AG04449 (cell line): ENCODE measurements at regions of chr12 and their contacts with region 1.

Region 1: DNA sequence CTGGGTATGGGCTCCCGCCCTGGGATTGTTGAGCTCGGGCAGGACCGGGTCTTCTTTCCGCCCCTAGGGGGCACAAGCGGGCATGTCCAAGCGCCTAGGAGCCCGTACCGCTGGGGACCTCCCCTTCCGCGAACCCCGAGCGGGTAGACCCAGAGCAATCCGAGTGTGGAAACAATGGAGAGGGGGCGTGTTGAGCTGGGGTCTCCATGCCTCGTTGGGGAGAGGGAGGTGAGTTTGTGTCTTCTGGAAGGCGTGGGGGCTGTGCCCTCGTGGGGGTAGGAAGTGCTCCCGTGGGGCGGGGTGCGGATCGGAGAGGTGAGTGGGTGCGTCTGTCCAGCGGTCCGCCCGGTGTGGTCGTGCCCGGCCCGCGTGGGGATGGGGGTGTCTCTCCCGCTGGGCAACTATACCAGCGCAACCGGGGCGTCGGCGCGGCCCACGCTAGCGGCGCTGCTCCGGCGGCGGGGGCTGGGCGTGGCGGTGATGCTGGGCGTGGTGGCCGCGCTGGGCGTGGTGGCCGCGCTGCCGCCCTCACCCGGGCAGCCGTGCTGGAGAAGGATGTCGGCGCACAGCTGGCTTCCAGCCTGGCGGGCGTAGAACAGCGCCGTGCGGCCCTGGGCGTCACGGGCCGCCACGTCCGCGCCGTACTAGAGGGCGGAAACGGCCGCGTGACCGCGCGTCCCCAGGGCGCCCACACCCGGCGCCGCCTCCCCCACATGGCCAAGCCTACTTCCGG is 12.2 kb downstream of the AGAP2 start:
- DNase-seq: peak; percentile 29
- H3K4me3 ChIP-seq: peak overlapping the region; percentile 91
- CTCF ChIP-seq: peak; percentile 94

Region 2: DNA sequence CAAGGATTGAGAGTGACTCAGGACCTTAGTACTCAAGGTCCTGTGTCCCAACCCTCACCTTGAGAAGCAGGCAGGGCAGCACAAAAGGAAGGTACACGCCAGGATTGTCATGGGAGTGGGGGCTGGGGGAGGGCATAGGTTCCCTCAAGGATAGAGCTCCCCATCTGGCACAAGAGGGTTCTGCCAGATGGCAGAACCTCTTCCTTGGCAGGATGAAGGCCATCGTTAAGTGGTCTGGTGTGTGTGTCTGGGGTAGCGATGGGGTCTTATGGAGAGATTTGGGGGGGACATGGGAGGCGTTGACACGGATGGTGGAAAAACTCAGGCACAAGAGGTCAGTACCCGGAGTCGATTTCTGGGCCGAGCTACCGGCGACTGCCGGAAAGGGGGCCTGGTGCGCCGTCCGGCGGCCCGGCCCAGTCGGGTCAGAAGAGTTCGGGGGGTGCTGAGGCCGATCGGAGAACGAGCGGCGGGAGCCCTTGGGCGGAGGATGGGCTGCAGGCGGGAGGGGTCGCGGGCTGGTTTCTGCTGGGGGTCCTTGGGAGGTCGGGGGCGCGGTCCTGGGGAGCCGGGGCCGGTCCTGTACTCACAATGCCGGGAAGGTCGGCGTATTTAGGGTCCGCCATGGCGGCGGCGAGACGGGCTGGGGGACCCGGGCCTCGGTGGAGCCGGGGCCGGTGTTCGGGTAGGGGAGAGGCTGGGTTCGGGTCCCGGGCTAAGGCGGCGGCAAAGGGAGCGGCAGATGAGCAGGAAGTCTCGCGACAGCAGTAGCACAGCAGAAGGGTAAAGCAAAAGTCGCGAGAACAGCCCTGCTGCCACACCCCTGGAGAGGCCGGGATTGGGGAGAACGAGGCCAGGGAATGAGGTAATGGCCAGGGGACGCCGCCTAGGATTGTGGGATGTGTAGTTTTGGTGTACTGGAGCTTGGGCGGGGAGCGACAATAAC is 179.6 kb before region 1 on chr12 and contains the start of gene DCTN2:
- CTCF ChIA-PET with region 1: no interaction called
- POLR2A ChIA-PET with region 1: no interaction called
- DNase-seq: peak; percentile 80
- H3K4me3 ChIP-seq: peak within 1 kb of the TSS; percentile 89
- CTCF ChIP-seq: no peak

Region 3: DNA sequence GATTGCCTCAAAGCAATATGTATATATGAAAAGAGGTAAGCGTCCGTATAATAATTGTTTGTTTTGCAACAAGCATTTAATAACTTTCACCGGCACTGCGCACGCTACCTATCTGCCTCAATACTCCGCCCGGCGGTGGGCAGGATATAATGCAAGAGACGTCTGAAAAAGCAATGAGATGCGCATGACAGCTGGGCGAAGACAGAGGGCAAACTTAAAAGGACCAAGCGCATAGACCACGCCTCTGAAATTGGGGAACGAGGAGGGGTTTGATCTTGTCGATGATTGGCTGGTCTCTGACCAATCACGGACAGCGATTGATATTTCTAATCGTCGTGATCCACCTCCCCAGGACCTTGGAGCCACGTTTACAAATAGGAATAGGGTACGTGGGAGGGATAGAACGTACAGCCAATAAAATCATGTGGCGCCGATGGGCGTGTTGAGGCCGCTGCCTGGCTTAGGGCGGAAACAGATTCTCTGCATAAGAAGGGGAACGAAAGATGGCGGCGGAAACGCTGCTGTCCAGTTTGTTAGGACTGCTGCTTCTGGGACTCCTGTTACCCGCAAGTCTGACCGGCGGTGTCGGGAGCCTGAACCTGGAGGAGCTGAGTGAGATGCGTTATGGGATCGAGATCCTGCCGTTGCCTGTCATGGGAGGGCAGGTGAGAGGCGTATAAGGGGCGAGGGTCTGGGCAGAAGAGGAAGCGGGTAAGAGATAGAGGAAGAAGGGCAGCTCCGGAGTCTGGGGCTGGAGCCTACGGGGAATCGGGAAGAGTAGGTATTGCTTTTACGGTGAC is 32.5 kb before region 1 on chr12 and contains the start of gene OS9:
- CTCF ChIA-PET with region 1: interaction called, 22 read pairs
- POLR2A ChIA-PET with region 1: no interaction called
- DNase-seq: peak; percentile 99
- H3K4me3 ChIP-seq: peak within 1 kb of the TSS; percentile 92
- CTCF ChIP-seq: peak; percentile 69

Region 4: GRCh38 chr12:57712701-57713100 is 13.6 kb before region 1 on chr12:
- CTCF ChIA-PET with region 1: interaction called, 20 read pairs
- POLR2A ChIA-PET with region 1: no interaction called
- DNase-seq: no peak
- H3K4me3 ChIP-seq: no peak overlapping the region
- CTCF ChIP-seq: no peak

Region 5: GRCh38 chr12:57744777-57745484 is 18.6 kb after region 1 on chr12 and contains the start of gene TSPAN31:
- CTCF ChIA-PET with region 1: interaction called, 26 read pairs
- POLR2A ChIA-PET with region 1: interaction called, 7 read pairs
- DNase-seq: peak; percentile 85
- H3K4me3 ChIP-seq: peak within 1 kb of the TSS; percentile 98
- CTCF ChIP-seq: no peak